B cell (primary cell): ENCODE measurements at regions of chr15 and their contacts with region 1.

Region 1: DNA sequence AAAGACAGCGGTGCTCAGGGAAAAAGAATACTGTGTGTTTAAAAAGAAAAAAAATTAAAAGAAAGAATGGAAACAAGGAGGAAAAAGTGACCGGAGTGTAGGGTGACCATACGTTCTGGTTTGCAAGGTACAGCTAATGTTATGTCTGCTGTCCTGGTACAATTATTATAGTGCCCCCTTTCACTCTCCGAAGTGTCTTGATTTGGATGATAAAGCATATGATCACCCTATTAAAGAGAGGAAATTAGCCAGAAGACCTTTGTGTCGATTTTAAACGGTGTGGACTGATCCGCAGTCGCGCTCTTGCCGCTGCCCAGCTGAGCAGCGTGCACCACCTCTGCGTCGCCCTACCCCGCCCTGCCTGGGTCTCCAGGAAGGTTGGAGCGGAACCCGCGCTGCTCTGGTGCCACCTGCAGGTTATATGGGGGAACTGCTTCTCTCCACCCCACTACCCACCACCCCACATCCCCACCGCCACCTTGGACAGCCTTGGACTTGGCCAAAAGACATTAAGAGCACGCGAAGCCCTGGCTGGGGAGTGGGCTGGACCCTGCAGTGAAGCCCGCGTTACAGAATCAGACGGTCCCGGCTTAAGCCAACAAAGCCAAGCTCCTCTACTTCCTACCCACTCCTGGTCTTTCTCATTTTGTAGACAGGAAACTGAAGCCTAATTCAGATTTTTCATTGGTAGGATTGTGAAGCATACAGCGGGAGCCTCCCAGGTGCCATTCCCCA is 41.2 kb upstream of the UBE2Q2 start:
- DNase-seq: peak; percentile 86
- ATAC-seq: peak; percentile 100
- H3K4me3 ChIP-seq: peak overlapping the region in 2 of 5 experiments; percentile 23 to 37
- H3K4me3 Mint-ChIP-seq: peak overlapping the region; percentile 55
- H3K27ac ChIP-seq: no peak overlapping the region
- H3K27ac Mint-ChIP-seq: no peak overlapping the region
- H3K4me1 ChIP-seq: peaks cover 4 to 8% of the 10 kb centered on the region in 2 donors
- H3K4me1 Mint-ChIP-seq: peaks cover 6% of the 10 kb centered on the region
- H3K27me3 ChIP-seq: peaks cover 0 to 18% (median 9%) of the 10 kb centered on the region in 4 experiments
- H3K27me3 Mint-ChIP-seq: peaks cover 55% of the 10 kb centered on the region
- CTCF ChIP-seq: peak; percentile 93

Region 2: GRCh38 chr15:74808073-74808755 is 993.8 kb before region 1 on chr15:
- CTCF ChIA-PET with region 1: no interaction called
- POLR2A ChIA-PET with region 1: no interaction called
- intact Hi-C with region 1: no loop called
- DNase-seq: no peak
- ATAC-seq: no peak
- H3K4me3 ChIP-seq: no peak overlapping the region
- H3K4me3 Mint-ChIP-seq: no peak overlapping the region
- H3K27ac ChIP-seq: peak overlapping the region in 1 of 2 donors; percentile 70
- H3K27ac Mint-ChIP-seq: peak overlapping the region; percentile 82
- H3K4me1 ChIP-seq: peaks cover 16 to 24% of the 10 kb centered on the region in 2 donors
- H3K4me1 Mint-ChIP-seq: peaks cover 30% of the 10 kb centered on the region
- H3K27me3 ChIP-seq: no peaks in the 10 kb centered on the region
- H3K27me3 Mint-ChIP-seq: no peaks in the 10 kb centered on the region
- CTCF ChIP-seq: no peak

Region 3: GRCh38 chr15:75508840-75509532 is 293.0 kb before region 1 on chr15:
- CTCF ChIA-PET with region 1: interaction called, 3 read pairs
- POLR2A ChIA-PET with region 1: no interaction called
- intact Hi-C with region 1: loop called (anchors 2 kb)
- DNase-seq: peak; percentile 45
- ATAC-seq: no peak
- H3K4me3 ChIP-seq: no peak overlapping the region
- H3K4me3 Mint-ChIP-seq: no peak overlapping the region
- H3K27ac ChIP-seq: no peak overlapping the region
- H3K27ac Mint-ChIP-seq: no peak overlapping the region
- H3K4me1 ChIP-seq: no peaks in the 10 kb centered on the region
- H3K4me1 Mint-ChIP-seq: no peaks in the 10 kb centered on the region
- H3K27me3 ChIP-seq: no peaks in the 10 kb centered on the region
- H3K27me3 Mint-ChIP-seq: no peaks in the 10 kb centered on the region
- CTCF ChIP-seq: peak; percentile 51

Region 4: GRCh38 chr15:75723847-75724660 is 78.0 kb before region 1 on chr15:
- CTCF ChIA-PET with region 1: interaction called, 101 read pairs
- POLR2A ChIA-PET with region 1: no interaction called
- intact Hi-C with region 1: no loop called
- DNase-seq: peak; percentile 72
- ATAC-seq: peak; percentile 57
- H3K4me3 ChIP-seq: no peak overlapping the region
- H3K4me3 Mint-ChIP-seq: no peak overlapping the region
- H3K27ac ChIP-seq: no peak overlapping the region
- H3K27ac Mint-ChIP-seq: no peak overlapping the region
- H3K4me1 ChIP-seq: peaks cover 0 to 7% of the 10 kb centered on the region in 2 donors
- H3K4me1 Mint-ChIP-seq: peaks cover 11% of the 10 kb centered on the region
- H3K27me3 ChIP-seq: peaks cover 0 to 7% (median 2%) of the 10 kb centered on the region in 4 experiments
- H3K27me3 Mint-ChIP-seq: peaks cover 21% of the 10 kb centered on the region
- CTCF ChIP-seq: no peak